ENCODE measurements at regions of chr18 and their contacts with region 1.

Region 1: GRCh38 chr18:11980555-11981382 is 538 bp upstream of the IMPA2 start:
- DNase-seq: peak; percentile 97 to 99
- H3K4me3 ChIP-seq: peak overlapping the region; percentile 75 to 88
- H3K27ac ChIP-seq: peak overlapping the region; percentile 89 to 96
- H3K4me1 ChIP-seq: peaks cover 4 to 16% (median 10%) of the 10 kb centered on the region in 4 donors
- H3K27me3 ChIP-seq: no peaks in the 10 kb centered on the region
- CTCF ChIP-seq: no peak

Region 2: DNA sequence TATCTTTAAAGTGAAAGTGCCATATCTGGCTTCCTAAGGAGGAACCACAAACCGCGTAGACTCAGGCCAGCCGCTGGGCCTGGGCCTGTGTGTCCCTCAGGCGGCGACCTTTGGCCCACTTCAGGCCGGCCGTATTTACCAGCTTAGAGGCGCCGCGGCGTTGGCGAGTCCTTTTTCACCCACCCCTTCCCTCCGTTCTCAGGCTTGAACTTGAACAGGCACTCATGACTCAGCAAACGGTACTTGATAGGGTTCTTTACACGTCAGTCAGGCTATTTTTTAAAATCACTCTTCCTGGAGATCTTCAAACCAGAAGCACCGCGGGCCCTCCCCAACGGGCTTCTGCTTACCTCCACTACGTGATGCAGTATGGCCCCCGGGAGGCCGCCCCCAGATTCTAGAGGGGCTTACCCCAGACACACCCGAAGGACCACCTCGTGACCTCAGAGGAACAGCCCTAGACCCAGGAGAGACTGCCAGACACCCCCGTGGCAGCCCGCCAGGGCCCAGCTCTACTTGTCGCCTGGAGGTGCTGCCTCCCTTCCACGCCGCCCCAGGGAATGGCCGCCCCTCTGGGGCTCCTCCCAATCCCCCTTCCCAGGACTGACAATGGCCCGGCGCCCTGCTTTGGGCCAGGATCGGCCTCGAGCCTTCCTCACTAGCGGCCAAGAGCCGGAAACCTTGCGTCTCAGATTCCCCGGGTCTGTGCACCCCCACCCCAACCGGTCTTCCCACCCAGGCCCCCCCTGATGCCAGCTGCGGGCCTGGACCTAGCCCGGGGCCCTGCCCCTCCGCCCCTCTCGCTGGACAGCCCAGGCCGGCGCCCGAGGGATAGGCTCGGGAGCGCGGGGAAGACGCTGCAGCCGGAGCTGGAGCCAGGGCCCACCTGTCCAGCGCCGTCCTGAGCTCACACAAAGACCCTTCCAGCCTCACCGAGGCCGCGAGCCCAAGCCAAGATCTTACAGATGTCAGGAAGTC is 33.3 kb before region 1 on chr18:
- intact Hi-C with region 1: loop called (anchors 5 kb)
- DNase-seq: peak; percentile 95 to 97
- H3K4me3 ChIP-seq: peak overlapping the region; percentile 49 to 63
- H3K27ac ChIP-seq: peak overlapping the region; percentile 85 to 93
- H3K4me1 ChIP-seq: peaks cover 0 to 20% (median 9%) of the 10 kb centered on the region in 4 donors
- H3K27me3 ChIP-seq: no peaks in the 10 kb centered on the region
- CTCF ChIP-seq: no peak